AG04450 (cell line): ENCODE measurements at regions of chr6 and their contacts with region 1.

Region 1: DNA sequence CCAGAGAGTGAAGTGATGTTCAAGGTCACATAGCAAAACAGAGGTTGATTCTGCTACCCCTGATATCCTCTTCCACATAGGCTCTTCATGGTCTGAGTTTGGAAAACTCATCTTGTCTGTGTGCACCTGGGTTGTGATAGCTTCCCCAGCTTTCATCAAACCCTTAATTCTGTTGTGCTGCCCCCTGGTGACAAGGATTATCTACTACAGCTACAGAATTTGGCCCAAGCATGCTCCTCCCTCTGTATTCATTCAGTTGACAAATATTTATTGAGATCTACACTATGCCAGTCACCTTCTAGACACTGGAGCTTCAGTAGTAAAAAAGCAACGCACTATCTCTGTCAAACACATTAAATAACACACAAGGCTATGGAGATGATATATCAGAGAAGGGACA is 50.4 kb downstream of the SMPDL3A start:
- DNase-seq: no peak
- H3K4me3 ChIP-seq: no peak overlapping the region
- H3K27ac ChIP-seq: no peak overlapping the region
- H3K27me3 ChIP-seq: peaks cover 3% of the 10 kb centered on the region
- CTCF ChIP-seq: peak; percentile 75

Region 2: DNA sequence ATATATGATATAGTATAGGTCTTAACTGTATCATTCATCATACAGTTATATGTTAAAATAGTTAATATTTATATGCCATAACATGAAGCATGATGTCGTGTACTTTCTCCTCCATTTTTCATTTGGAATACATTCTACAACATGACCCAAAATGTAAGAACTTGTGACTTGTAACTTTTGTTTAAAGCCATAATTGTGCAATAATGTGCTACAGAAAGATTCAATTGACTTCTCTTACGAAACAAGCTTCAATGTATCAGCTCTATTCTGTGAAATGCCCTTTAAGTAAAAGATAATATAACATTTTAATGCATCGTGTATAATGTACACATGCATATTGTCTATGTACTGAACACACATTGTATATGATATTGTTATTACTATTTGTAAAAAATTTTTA is 136.6 kb before region 1 on chr6:
- CTCF ChIA-PET with region 1: no interaction called
- POLR2A ChIA-PET with region 1: no interaction called
- DNase-seq: no peak
- H3K4me3 ChIP-seq: no peak overlapping the region
- H3K27ac ChIP-seq: no peak overlapping the region
- H3K27me3 ChIP-seq: no peaks in the 10 kb centered on the region
- CTCF ChIP-seq: no peak

Region 3: GRCh38 chr6:122717350-122717749 is 122.1 kb before region 1 on chr6:
- CTCF ChIA-PET with region 1: interaction called, 16 read pairs
- POLR2A ChIA-PET with region 1: no interaction called
- DNase-seq: no peak
- H3K4me3 ChIP-seq: no peak overlapping the region; the same call in 1 of the 2 replicates
- H3K27ac ChIP-seq: no peak overlapping the region
- H3K27me3 ChIP-seq: no peaks in the 10 kb centered on the region
- CTCF ChIP-seq: no peak

Region 4: DNA sequence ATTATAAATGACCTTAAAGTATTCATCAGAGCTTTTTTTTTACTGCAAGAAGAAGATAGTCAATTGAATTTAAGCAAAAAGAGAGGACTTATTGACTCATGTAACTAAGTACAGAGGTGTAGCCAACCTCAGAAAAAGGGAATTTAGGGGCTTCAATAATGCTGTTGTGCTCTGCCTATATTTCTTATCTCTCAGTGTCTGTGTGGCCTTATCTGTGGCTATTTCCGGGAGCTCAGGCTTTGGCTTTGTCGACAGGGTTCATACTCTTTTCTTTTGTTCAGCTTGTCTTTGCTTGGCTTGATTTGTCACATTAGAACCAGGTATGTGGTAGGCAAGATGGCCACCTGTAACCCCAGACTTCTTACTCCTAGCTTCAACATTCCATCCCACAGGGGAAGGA is 98.5 kb before region 1 on chr6:
- CTCF ChIA-PET with region 1: interaction called, 406 read pairs
- POLR2A ChIA-PET with region 1: no interaction called
- DNase-seq: no peak
- H3K4me3 ChIP-seq: no peak overlapping the region
- H3K27ac ChIP-seq: no peak overlapping the region
- H3K27me3 ChIP-seq: no peaks in the 10 kb centered on the region
- CTCF ChIP-seq: no peak

Region 5: DNA sequence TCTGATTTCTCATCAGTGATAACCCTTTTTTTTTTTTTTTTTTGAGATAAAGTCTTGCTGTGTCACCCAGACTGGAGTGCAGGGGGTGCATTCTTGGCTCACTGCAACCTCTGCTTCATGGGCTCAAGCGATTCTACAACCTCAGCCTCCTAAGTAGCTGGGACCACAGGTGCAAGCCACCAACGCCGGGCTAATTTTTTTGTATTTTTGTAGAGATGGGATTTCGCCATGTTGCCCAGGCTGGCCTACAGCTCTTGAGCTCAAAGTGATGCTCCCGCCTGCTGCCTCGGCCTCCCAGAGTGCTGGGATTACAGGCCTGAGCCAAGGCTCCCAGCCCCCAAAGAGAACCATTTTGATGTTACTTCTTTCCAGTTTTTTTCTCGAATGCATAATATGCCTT is 57.8 kb before region 1 on chr6:
- CTCF ChIA-PET with region 1: interaction called, 13 read pairs
- POLR2A ChIA-PET with region 1: no interaction called
- DNase-seq: no peak
- H3K4me3 ChIP-seq: no peak overlapping the region
- H3K27ac ChIP-seq: no peak overlapping the region
- H3K27me3 ChIP-seq: no peaks in the 10 kb centered on the region
- CTCF ChIP-seq: no peak

Region 6: GRCh38 chr6:122803171-122803661 is 36.3 kb before region 1 on chr6:
- CTCF ChIA-PET with region 1: interaction called, 19 read pairs
- POLR2A ChIA-PET with region 1: no interaction called
- DNase-seq: peak; percentile 79
- H3K4me3 ChIP-seq: no peak overlapping the region
- H3K27ac ChIP-seq: peak overlapping the region; percentile 47
- H3K27me3 ChIP-seq: no peaks in the 10 kb centered on the region
- CTCF ChIP-seq: no peak